Panc1 (cell line): ENCODE measurements at regions of chr11 and their contacts with region 1.

Region 1: GRCh38 chr11:72454791-72455190 is 20.5 kb upstream of the CLPB start:
- DNase-seq: no peak
- ATAC-seq: no peak
- H3K4me3 ChIP-seq: no peak overlapping the region
- H3K27ac ChIP-seq: no peak overlapping the region
- H3K4me1 ChIP-seq: no peaks in the 10 kb centered on the region
- H3K27me3 ChIP-seq: peaks cover 11% of the 10 kb centered on the region
- CTCF ChIP-seq: peak; percentile 65

Region 2: GRCh38 chr11:72418834-72419562 is 35.8 kb before region 1 on chr11:
- CTCF ChIA-PET with region 1: no interaction called
- POLR2A ChIA-PET with region 1: no interaction called
- in situ Hi-C with region 1: no loop called
- intact Hi-C with region 1: no loop called
- DNase-seq: no peak
- ATAC-seq: peak; percentile 60; the same call in 1 of the 2 replicates
- H3K4me3 ChIP-seq: no peak overlapping the region
- H3K27ac ChIP-seq: no peak overlapping the region
- H3K4me1 ChIP-seq: no peaks in the 10 kb centered on the region
- H3K27me3 ChIP-seq: no peaks in the 10 kb centered on the region
- CTCF ChIP-seq: no peak; the same call in 1 of the 2 replicates

Region 3: DNA sequence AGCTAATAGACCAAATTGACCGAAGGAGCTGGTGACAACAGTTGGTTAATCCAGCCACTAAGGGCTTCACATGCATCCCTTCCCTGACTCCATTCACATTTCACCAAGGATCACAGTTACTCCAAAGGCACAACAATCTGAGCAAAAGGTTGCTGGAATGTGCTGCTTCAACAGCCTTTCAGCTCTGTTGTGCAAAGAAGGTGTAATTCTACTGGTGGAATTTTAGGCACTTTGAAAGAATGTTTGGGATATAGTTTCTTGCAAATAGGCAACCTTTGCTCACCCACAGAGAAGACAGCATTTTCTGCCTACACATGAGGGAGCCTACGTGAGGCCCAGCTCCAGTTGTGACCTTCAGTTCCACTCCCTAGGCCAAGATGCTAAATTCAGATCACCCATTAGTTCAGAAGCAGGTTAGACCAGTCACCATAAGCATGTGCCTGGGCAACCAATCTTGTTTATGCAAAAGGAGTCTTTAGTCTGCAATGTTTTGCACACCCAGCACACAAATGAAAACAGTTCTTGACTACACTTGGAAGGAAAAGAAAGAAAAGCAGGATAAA is 708.9 kb after region 1 on chr11:
- CTCF ChIA-PET with region 1: interaction called, 11 read pairs
- POLR2A ChIA-PET with region 1: no interaction called
- in situ Hi-C with region 1: no loop called
- intact Hi-C with region 1: no loop called
- DNase-seq: no peak
- ATAC-seq: no peak
- H3K4me3 ChIP-seq: no peak overlapping the region
- H3K27ac ChIP-seq: no peak overlapping the region
- H3K4me1 ChIP-seq: no peaks in the 10 kb centered on the region
- H3K27me3 ChIP-seq: no peaks in the 10 kb centered on the region; the same call in 1 of the 2 replicates
- CTCF ChIP-seq: no peak